H1 (cell line): ENCODE measurements at regions of chr19 and their contacts with region 1.

Region 1: DNA sequence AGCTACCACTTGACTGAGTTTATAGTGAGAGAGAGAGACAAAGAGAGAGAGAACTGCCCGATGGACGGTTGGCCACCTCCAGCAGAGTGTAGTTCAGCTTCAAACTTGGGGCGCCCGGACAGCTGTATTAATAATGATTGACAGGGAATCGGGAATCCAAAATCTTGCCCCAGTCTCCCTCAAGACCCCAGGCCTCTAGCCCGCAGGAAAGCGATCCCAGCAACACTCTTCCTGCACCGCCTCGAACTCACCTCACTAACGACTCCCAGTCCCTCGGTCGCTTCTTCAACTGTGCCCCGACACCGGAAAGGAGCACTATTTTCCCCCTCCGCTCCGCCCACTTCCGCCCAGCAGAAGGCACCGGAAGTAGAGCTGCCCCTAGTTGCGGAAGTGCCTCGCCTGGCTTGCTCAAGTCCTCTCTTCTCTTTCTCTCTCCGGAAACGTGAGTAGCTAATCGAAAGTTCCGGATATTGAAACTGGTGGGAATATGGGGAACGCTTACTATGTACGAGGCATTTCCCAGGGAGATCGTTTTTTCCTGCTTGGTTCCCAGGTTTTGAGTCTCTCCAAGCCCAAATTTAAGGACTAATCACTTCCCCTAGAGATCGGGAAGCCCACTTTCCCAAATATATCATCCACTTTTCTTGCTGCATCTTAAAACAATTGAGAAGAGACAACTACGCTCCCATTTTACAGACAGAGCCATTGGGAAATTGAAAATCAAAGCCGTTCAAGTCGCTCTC is at the start of gene NOSIP:
- DNase-seq: peak; percentile 89 to 95
- H3K4me3 ChIP-seq: peak within 1 kb of the TSS; percentile 87 to 99 (median 92)
- H3K27ac ChIP-seq: peak within 1 kb of the TSS; percentile 51
- H3K4me1 ChIP-seq: peaks cover 2 to 19% (median 8%) of the 10 kb centered on the region in 4 experiments
- H3K27me3 ChIP-seq: no peaks in the 10 kb centered on the region
- CTCF ChIP-seq: no peak
- EP300 ChIP-seq: 0 out of 3 replicates have a peak, but pooled peaks of 1 of the 2 experiments have one; percentile 47
- POLR2A ChIP-seq: peak; percentile 95 to 99
- RAD21 ChIP-seq: no peak
- total RNA-seq, gene NOSIP: 85.1 and 93.8 TPM in 2 replicates

Region 2: DNA sequence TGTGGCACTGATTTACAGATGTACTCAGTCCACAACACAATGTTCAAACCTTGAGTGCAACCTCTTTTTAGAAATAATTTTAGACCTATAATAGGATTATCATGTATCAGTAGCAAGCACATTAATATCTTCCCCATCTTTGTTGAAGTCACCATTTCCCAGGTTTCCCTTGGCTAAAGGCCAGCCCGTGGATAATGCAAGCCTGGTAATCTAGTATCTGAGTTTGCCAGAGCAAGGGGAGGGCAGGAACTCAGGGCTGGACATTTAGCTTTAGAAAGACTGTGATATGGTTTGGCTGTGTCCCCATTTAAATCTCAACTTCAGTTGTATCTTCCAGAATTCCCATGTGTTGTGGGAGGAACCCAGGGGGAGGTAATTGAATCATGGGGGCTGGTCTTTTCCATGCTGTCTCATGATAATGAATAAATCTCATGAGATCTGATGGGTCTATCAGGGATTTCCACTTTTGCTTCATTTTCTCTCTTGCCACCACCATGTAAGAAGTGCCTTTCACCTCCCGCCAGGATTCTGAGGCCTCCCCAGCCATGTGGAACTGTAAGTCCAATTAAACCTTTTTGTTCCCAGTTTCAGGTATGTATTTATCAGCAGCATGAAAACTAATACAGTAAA is 293.2 kb before region 1 on chr19:
- CTCF ChIA-PET with region 1: no interaction called
- POLR2A ChIA-PET with region 1: no interaction called
- DNase-seq: no peak
- H3K4me3 ChIP-seq: no peak overlapping the region
- H3K27ac ChIP-seq: no peak overlapping the region
- H3K4me1 ChIP-seq: no peaks in the 10 kb centered on the region
- H3K27me3 ChIP-seq: no peaks in the 10 kb centered on the region
- CTCF ChIP-seq: no peak
- EP300 ChIP-seq: no peak
- POLR2A ChIP-seq: no peak
- RAD21 ChIP-seq: no peak

Region 3: GRCh38 chr19:49315111-49315510 is 265.3 kb before region 1 on chr19:
- CTCF ChIA-PET with region 1: no interaction called
- POLR2A ChIA-PET with region 1: no interaction called
- DNase-seq: no peak
- H3K4me3 ChIP-seq: no peak overlapping the region
- H3K27ac ChIP-seq: no peak overlapping the region
- H3K4me1 ChIP-seq: no peaks in the 10 kb centered on the region
- H3K27me3 ChIP-seq: no peaks in the 10 kb centered on the region
- CTCF ChIP-seq: no peak
- EP300 ChIP-seq: no peak
- POLR2A ChIP-seq: no peak
- RAD21 ChIP-seq: no peak

Region 4: GRCh38 chr19:49609499-49610092 is 29.2 kb after region 1 on chr19:
- CTCF ChIA-PET with region 1: interaction called, 3 read pairs
- POLR2A ChIA-PET with region 1: interaction called, 840 read pairs
- DNase-seq: no peak
- H3K4me3 ChIP-seq: no peak overlapping the region
- H3K27ac ChIP-seq: no peak overlapping the region
- H3K4me1 ChIP-seq: no peaks in the 10 kb centered on the region
- H3K27me3 ChIP-seq: no peaks in the 10 kb centered on the region
- CTCF ChIP-seq: no peak
- EP300 ChIP-seq: no peak
- POLR2A ChIP-seq: no peak
- RAD21 ChIP-seq: no peak